PC-3 (cell line): ENCODE measurements at regions of chrX and their contacts with region 1.

Region 1: DNA sequence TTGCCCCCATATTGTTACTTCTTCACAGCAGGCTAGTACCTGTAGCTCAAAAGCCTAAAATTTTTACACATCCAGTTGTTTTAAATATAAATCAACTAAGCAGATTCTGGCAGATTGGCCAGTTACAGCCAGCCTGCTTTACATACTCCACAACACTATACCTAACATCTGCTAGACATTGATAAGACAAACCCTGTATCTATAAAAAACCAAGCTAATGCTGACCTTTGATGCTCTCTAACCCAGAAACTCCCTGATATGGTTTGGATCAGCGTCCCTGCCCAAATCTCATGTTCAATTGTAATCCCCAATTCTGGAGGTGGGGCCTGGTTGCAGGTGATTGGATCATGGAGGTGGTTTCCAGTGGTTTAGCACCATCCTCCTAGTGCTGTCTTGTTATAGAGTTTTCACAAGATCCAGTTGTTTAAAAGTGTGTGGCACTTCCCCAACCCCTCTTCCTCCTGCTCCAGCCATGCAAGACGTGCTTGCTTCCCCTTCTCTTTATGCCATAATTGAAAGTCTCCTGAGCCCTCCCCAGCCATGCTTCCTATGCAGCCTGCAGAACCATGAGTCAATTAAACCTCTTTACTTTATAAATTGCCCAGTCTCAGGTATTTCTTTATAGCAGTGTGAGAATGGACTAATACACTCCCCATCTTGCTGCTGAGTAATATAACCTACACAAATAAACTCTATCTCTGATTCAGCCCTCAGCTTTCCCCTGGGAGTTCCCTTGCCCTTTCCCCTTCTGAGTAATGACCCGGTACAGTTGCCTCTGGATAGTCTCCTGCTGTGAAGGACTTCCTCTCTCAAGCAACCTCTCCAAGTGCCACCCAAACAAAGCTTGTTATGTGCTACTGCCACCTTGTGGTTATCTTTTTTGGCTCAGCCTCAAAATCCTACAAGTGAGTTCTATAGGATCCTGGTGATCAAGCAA is 39.6 kb downstream of the ZCCHC13 start:
- DNase-seq: peak; percentile 96
- ATAC-seq: peak; percentile 99
- H3K4me3 ChIP-seq: peak overlapping the region; percentile 15; the same call in 1 of the 2 replicates
- H3K27ac ChIP-seq: peak overlapping the region; percentile 89
- H3K4me1 ChIP-seq: peaks cover 8% of the 10 kb centered on the region
- H3K27me3 ChIP-seq: no peaks in the 10 kb centered on the region
- CTCF ChIP-seq: peak; percentile 79

Region 2: GRCh38 chrX:73855546-73855945 is 488.1 kb before region 1 on chrX:
- CTCF ChIA-PET with region 1: no interaction called
- POLR2A ChIA-PET with region 1: no interaction called
- intact Hi-C with region 1: loop called (anchors 1 kb)
- DNase-seq: peak; percentile 78
- ATAC-seq: peak; percentile 65
- H3K4me3 ChIP-seq: no peak overlapping the region
- H3K27ac ChIP-seq: no peak overlapping the region
- H3K4me1 ChIP-seq: no peaks in the 10 kb centered on the region
- H3K27me3 ChIP-seq: no peaks in the 10 kb centered on the region
- CTCF ChIP-seq: peak; percentile 83

Region 3: DNA sequence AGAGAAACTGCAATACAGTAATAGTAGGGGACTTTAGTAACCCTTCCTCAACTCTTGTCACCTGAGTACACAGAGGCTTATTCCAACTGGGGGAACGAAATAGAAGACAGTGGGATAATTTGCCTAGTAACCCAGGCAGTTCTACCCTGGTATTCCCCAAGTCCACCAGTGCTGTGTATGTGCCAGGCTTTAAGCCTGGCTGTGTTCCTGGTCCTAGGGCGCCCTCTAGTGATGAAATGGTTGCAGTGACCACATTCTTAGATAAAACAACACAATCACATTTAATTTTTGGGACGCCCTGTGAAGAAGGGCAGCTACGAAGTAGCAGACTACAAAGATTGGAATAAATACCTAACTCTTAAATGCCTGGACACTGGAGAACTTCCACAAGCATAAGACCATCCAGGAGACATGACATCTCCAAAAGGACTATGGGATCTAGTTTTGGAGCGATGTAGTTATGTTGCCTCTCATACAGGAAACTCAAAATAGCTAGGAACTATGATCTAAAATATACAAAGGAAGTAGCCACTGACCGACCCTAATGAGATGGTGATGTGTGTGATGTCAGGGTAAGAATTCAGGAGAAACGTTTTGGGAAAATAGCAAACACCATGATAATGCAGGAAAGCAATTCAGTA is 328.1 kb before region 1 on chrX:
- CTCF ChIA-PET with region 1: no interaction called
- POLR2A ChIA-PET with region 1: no interaction called
- intact Hi-C with region 1: loop called (anchors 1 kb)
- DNase-seq: peak; percentile 80
- ATAC-seq: peak; percentile 85
- H3K4me3 ChIP-seq: no peak overlapping the region
- H3K27ac ChIP-seq: no peak overlapping the region
- H3K4me1 ChIP-seq: 0 out of 2 replicates have a peak, but pooled peaks cover 3% of the 10 kb centered on the region
- H3K27me3 ChIP-seq: no peaks in the 10 kb centered on the region
- CTCF ChIP-seq: peak; percentile 90

Region 4: DNA sequence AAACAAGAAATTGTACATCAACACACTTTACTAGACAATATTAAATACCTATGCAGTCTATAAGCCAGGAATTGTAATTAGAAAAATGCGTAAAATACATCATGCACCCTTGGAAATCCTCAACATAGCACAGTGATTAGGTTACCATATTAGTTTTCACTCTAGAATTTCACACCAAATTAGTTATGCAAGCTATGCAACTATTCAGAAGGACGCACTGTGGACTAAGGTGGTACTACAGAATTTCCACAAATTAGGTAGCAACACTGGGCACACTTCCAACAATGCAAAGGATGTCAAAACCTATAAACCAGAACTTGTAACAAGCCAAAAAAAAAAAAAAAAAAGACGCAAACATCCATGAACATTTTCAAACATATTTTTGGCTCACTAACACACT is 110.8 kb before region 1 on chrX:
- CTCF ChIA-PET with region 1: no interaction called
- POLR2A ChIA-PET with region 1: no interaction called
- intact Hi-C with region 1: loop called (anchors 5 kb)
- DNase-seq: peak; percentile 76
- ATAC-seq: peak; percentile 18; the same call in 1 of the 2 replicates
- H3K4me3 ChIP-seq: no peak overlapping the region
- H3K27ac ChIP-seq: peak overlapping the region; percentile 45
- H3K4me1 ChIP-seq: peaks cover 25% of the 10 kb centered on the region
- H3K27me3 ChIP-seq: no peaks in the 10 kb centered on the region
- CTCF ChIP-seq: peak; percentile 37

Region 5: DNA sequence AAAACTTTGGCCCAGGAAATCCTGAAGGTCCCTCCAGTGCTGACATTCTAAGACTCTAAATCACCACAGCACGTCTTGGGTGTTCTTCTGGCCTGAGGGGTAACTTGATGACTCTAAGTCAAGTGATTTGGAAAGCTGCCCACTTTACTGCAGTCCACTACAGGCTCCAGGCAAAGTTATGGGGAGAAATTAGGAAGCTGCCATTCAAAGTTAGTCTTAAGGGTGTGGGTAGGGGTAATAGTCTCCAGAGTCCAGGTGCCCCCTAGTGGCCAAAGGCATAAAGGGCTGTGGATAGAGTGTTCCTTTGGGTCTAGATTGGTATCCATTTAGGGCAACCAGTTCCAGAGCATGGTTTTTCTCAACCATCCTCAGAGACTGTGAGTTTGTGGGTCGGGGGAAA is 39.0 kb after region 1 on chrX:
- CTCF ChIA-PET with region 1: no interaction called
- POLR2A ChIA-PET with region 1: no interaction called
- intact Hi-C with region 1: loop called (anchors 1 kb)
- DNase-seq: peak; percentile 83
- ATAC-seq: peak; percentile 85
- H3K4me3 ChIP-seq: no peak overlapping the region
- H3K27ac ChIP-seq: no peak overlapping the region
- H3K4me1 ChIP-seq: peaks cover 8% of the 10 kb centered on the region
- H3K27me3 ChIP-seq: no peaks in the 10 kb centered on the region
- CTCF ChIP-seq: peak; percentile 83

Region 6: GRCh38 chrX:74423289-74423998 is 79.8 kb after region 1 on chrX:
- CTCF ChIA-PET with region 1: no interaction called
- POLR2A ChIA-PET with region 1: no interaction called
- intact Hi-C with region 1: no loop called
- DNase-seq: no peak
- ATAC-seq: no peak
- H3K4me3 ChIP-seq: no peak overlapping the region
- H3K27ac ChIP-seq: no peak overlapping the region
- H3K4me1 ChIP-seq: peaks cover 28% of the 10 kb centered on the region
- H3K27me3 ChIP-seq: no peaks in the 10 kb centered on the region
- CTCF ChIP-seq: no peak